ENCODE measurements at regions of chr9 and their contacts with region 1.

Region 1: DNA sequence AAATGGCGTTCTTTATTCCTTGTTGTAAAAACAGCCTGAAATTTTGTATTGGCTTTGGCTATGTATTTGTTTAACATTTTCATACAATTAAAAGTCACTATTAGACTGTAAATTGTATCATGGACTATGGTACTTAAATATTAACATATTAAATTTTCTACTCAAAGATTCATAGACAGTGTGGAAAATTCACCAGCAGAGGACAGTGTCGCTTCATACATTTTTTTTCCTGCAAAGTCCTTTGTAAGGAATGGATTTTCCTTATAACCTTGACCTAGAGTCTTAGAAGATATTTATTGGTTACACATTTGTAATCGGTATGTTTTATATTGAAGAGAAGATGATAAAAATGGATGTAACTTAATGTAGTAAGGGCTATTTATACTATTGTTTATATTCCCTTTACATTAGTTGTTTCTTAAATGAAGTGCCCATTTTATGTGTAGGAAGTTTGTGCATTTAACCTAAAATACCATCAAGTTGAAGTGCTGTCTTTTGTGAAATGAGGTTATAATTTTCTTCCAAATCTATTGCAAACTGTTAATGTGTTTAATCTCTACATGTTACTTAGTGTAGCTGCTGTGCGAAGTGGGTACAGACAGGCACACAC is 150.1 kb downstream of the KDM4C start:
- DNase-seq: no peak
- ATAC-seq: no peak
- H3K4me3 ChIP-seq: no peak overlapping the region
- H3K27ac ChIP-seq: no peak overlapping the region
- H3K4me1 ChIP-seq: no peaks in the 10 kb centered on the region
- H3K27me3 ChIP-seq: no peaks in the 10 kb centered on the region
- CTCF ChIP-seq: peak; percentile 41; the same call in 1 of the 2 replicates

Region 2: DNA sequence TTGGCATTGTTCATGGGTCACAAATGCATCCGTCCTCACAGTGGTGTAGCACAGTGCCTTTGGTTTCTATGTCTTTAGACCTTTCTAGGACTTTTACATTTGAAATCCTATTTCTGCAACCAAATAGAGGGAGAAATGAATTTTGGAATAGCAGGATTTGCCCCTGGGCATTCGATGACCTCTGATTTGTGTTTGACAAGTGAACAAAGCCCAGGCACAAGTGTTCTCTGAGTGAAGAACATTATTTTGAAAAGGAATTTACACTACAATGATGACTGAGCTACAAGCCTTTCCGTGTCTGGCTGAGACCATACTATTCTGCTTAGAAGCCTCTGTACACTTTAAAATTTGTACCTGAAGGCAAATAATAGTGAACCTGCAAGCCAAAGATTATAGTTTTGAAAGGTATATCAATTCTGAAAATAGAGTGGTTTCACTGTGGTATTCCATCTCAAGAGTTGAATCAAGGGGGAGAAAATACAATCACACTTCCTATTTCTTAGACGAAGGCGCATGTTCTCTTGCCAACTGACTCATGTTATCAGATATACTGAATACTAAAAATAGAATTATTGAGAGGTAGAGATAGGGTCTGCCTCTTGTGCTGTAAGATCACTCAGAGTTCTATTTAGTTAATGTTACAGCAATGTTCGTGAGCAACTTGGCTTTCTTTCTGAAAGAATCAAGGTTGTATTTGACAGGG is 147.5 kb after region 1 on chr9:
- CTCF ChIA-PET with region 1: interaction called, 14 read pairs
- POLR2A ChIA-PET with region 1: no interaction called
- in situ Hi-C with region 1: no loop called
- intact Hi-C with region 1: no loop called
- DNase-seq: no peak
- ATAC-seq: no peak
- H3K4me3 ChIP-seq: no peak overlapping the region
- H3K27ac ChIP-seq: no peak overlapping the region
- H3K4me1 ChIP-seq: no peaks in the 10 kb centered on the region
- H3K27me3 ChIP-seq: no peaks in the 10 kb centered on the region
- CTCF ChIP-seq: no peak

Measured in Panc1 (cell line).